CD4-positive, alpha-beta memory T cell (primary cell): ENCODE measurements at regions of chr19 and their contacts with region 1.

Region 1: DNA sequence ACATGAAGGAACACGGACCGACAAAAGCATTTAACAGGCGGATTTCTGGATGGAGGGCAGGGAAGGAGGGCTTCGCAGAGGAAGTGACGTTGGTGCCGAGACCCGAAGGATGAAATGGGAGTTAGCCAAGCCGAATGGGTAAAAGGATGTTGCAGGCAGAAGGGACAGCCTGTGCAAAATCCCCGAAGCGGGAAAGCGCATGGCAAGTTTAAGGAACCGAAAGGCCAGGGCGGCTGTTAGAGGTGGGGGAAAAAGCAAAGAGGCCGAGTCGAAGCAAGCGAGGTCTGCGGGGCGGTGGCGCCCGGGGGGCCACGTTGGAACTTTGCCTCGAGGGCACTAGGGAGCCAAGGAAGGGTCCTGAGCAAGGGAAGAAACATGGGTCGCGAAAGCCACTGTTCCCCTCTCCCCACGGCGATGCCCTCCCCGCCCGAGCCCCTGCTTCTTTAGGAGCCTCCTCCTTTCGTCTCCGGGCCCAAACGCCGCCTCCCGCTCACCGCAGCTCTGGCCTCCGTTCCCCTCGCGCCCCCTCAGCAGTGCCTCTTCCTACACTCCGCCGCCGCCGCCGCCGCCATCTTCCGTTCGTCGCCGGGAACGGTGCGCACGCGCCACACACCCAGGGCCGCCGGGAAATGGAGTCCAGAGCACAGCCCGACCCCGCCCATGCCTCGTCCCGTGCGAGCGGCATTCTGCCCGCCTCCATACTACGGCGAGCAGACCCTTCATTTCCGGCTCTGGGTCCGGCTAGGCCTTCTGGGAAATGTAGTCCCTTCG is at the start of gene SYMPK:
- DNase-seq: peak; percentile 98 to 99 (median 99)
- H3K4me3 ChIP-seq: peak within 1 kb of the TSS; percentile 66 to 84
- H3K4me3 Mint-ChIP-seq: peak within 1 kb of the TSS; percentile 88 to 100 (median 97)
- H3K27ac ChIP-seq: peak within 1 kb of the TSS; percentile 85
- H3K27ac Mint-ChIP-seq: peak within 1 kb of the TSS; percentile 68 to 100 (median 97)
- H3K4me1 ChIP-seq: peaks cover 23% of the 10 kb centered on the region
- H3K4me1 Mint-ChIP-seq: peaks cover 19 to 42% (median 28%) of the 10 kb centered on the region in 4 donors
- H3K27me3 ChIP-seq: no peaks in the 10 kb centered on the region
- H3K27me3 Mint-ChIP-seq: peaks cover 1 to 6% of the 10 kb centered on the region in 2 donors
- total RNA-seq, gene SYMPK: 93.9 to 98.2 TPM

Region 2: DNA sequence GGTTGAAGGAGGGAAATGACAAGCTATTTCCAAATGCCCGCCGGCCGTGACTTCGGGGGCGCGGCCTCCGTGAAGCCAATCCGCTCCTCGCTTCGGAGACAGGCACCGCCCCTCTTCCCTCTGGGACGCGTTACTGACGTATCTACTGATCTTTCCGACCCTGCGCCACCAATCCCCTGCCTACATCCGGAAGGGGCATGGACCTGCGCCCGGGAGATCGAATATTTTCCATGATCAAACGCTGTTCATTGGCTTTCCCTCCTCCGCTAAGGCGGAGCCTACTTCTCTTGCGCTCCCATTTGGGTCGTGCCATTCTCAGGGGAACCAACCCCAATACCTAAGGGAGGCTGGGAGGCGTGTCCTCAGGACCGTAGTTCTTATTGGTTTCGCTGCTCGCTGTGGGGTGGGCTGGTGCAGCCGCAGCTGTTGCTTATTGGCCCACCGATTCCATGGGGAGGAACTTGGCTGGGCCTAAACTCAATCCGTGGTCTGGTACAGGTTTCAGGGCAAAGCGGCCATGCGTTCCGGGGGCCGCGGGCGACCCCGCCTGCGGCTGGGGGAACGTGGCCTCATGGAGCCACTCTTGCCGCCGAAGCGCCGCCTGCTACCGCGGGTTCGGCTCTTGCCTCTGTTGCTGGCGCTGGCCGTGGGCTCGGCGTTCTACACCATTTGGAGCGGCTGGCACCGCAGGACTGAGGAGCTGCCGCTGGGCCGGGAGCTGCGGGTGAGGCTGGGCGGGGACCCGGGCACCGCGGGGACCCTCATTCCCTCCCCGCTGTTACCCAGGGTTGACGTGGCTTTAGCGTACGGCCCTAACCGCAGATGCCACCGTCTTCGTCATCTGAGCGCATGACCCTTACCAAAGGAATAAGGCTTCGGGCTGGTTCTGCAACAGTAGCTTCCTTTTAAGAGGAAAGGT is 170.3 kb before region 1 on chr19 and contains the start of gene QPCTL:
- CTCF ChIA-PET with region 1: no interaction called
- POLR2A ChIA-PET with region 1: interaction called, 5 read pairs
- intact Hi-C with region 1: loop called (anchors 1 kb)
- DNase-seq: peak; percentile 98 to 99 (median 98)
- H3K4me3 ChIP-seq: peak within 1 kb of the TSS; percentile 70 to 94
- H3K4me3 Mint-ChIP-seq: peak within 1 kb of the TSS; percentile 90 to 100 (median 94)
- H3K27ac ChIP-seq: peak within 1 kb of the TSS; percentile 88
- H3K27ac Mint-ChIP-seq: peak within 1 kb of the TSS; percentile 91 to 100 (median 97)
- H3K4me1 ChIP-seq: peaks cover 17% of the 10 kb centered on the region
- H3K4me1 Mint-ChIP-seq: peaks cover 11 to 35% (median 17%) of the 10 kb centered on the region in 4 donors
- H3K27me3 ChIP-seq: no peaks in the 10 kb centered on the region
- H3K27me3 Mint-ChIP-seq: no peaks in the 10 kb centered on the region
- total RNA-seq, gene QPCTL: 10.8 to 11.4 TPM

Region 3: DNA sequence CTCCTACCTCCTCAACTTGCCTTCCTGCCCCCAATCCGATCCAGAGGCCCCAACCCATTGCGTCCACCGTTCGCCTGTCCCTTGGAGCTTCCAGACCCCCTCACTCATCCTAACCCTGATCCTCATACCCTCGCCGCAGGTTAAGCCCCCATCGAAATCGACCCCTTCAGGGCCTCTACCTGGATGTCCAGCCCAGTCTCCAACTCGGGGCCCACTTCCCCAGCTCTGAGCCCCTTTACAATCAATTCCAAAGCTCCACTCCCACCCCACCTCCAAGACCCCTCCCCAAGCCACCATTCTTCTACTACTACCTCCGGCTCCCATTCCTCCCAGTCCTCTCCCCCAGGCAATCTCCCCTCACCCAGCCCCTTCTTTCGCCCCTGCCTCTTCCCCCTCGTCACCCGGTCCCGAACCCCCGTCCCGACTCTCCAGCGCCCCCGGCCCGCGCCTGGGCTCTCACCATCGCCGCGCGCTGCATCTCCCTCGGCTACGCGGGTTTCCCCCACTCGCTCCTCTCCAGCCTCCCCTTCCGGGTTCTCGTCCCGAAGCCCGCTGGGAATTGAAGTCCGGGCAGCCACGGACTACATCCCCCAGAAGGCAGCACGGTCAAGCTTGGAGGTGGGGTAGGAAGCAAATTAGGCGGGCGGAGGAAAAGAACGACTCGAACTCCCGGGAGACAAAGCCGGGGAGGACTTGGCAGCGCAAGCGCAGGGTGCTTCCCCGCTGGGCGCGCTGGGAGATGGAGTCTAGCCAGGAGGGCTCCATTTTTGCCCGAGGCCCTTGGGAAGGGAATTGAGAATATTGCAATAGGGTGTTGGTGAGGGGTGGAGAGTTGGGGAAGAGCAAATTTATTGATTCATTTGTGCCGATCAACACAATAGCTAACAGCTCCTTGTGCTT is 132.1 kb before region 1 on chr19 and contains the start of gene FBXO46:
- CTCF ChIA-PET with region 1: no interaction called
- POLR2A ChIA-PET with region 1: interaction called, 4 read pairs
- intact Hi-C with region 1: loop called (anchors 2 kb)
- DNase-seq: peak; percentile 90 to 97 (median 92)
- H3K4me3 ChIP-seq: peak within 1 kb of the TSS; percentile 68 to 97
- H3K4me3 Mint-ChIP-seq: peak within 1 kb of the TSS; percentile 89 to 100 (median 93)
- H3K27ac ChIP-seq: peak within 1 kb of the TSS; percentile 89
- H3K27ac Mint-ChIP-seq: peak within 1 kb of the TSS; percentile 83 to 96 (median 94)
- H3K4me1 ChIP-seq: peaks cover 35% of the 10 kb centered on the region
- H3K4me1 Mint-ChIP-seq: peaks cover 16 to 51% (median 30%) of the 10 kb centered on the region in 4 donors
- H3K27me3 ChIP-seq: no peaks in the 10 kb centered on the region
- H3K27me3 Mint-ChIP-seq: no peaks in the 10 kb centered on the region
- total RNA-seq, gene FBXO46: 33.1 to 37.3 TPM

Region 4: DNA sequence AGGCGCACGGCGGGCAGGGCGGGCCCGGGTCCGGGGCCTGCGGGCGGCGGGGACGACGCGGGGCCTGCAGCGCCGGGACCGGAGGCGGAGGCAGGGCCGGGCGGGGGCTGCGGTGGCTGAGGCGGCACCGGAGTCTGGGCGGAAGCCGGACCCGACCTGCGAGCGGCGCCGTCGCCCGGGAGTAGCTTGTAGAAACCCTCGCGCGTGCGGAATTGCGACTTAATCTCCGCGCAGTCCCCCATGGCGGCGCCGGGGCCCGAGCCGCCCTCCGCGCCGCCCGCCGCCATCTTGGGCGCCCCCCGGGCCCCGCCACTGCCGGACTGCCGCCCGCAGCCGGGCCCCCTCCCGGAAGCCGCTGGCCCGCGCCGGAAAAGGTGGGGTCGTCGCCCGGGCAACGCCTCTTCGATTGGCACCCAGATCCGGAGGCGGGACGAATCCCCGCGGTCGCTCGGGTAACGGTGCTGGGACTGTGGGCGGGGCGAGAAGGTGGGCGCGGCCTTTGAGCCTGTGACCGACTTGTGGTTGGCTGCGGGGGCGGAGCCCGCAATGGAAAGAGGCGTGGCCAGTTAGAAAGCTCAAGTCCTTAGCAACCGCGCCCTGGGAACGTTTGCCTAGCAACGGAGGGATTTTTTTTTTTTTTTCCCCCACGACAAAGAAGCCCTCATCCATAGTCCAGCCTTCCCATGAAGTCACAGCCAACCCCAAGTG is 70.1 kb before region 1 on chr19 and contains the start of gene DMWD:
- CTCF ChIA-PET with region 1: no interaction called
- POLR2A ChIA-PET with region 1: interaction called, 11 read pairs
- intact Hi-C with region 1: loop called (anchors 2 kb)
- DNase-seq: peak; percentile 97 to 99 (median 98)
- H3K4me3 ChIP-seq: peak within 1 kb of the TSS; percentile 33 to 62
- H3K4me3 Mint-ChIP-seq: peak within 1 kb of the TSS; percentile 82 to 92 (median 89)
- H3K27ac ChIP-seq: no peak within 1 kb of the TSS
- H3K27ac Mint-ChIP-seq: peak within 1 kb of the TSS; percentile 79 to 96 (median 91)
- H3K4me1 ChIP-seq: peaks cover 32% of the 10 kb centered on the region
- H3K4me1 Mint-ChIP-seq: peaks cover 31 to 46% (median 36%) of the 10 kb centered on the region in 4 donors
- H3K27me3 ChIP-seq: peaks cover 4% of the 10 kb centered on the region
- H3K27me3 Mint-ChIP-seq: peaks cover 8 to 20% of the 10 kb centered on the region in 2 donors
- total RNA-seq, gene DMWD: 49.3 to 52.6 TPM

Region 5: GRCh38 chr19:45886427-45887199 is 23.9 kb after region 1 on chr19:
- CTCF ChIA-PET with region 1: interaction called, 38 read pairs
- POLR2A ChIA-PET with region 1: interaction called, 47 read pairs
- intact Hi-C with region 1: loop called (anchors 1 kb)
- DNase-seq: peak; percentile 87 to 93 (median 91)
- H3K4me3 ChIP-seq: peak overlapping the region; percentile 65 to 71
- H3K4me3 Mint-ChIP-seq: peak overlapping the region; percentile 94 to 98 (median 98)
- H3K27ac ChIP-seq: peak overlapping the region; percentile 68
- H3K27ac Mint-ChIP-seq: peak overlapping the region; percentile 97 to 99 (median 99)
- H3K4me1 ChIP-seq: peaks cover 40% of the 10 kb centered on the region
- H3K4me1 Mint-ChIP-seq: peaks cover 11 to 36% (median 19%) of the 10 kb centered on the region in 4 donors
- H3K27me3 ChIP-seq: no peaks in the 10 kb centered on the region
- H3K27me3 Mint-ChIP-seq: peaks cover 0 to under 1% of the 10 kb centered on the region in 2 donors

Region 6: DNA sequence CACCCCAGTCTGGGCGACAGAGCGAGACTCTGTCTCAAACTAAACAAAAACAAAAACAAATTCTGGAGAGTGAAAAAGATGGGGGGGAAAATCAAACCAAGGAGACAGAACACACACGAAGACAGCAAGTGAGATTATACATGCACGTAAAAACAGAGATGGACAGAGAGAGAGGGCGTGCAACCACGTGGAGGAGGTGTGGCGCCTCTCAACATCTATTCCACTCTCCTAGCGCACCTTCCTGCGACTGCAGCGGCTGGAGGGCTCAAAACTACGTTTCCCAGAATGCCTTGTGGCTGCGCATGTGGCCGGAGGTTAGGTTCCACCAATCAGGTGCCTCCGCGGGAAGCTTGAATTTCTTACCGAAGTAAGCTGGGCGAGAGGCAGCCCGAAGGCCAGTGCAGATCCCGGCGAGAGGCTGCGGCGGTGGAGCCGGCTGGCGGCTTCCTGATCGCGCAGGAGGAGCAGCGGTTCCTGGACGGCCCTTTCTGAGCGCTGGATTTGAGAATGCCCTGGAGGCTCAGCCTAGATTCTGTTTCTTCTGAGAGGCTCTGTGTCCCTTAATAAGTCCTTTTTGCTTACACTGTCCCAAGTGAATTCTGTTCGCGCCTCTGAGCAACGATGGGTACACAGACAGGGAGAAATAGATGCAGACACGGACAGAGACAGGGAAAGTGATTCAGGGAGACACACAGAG is 65.0 kb after region 1 on chr19:
- CTCF ChIA-PET with region 1: no interaction called
- POLR2A ChIA-PET with region 1: interaction called, 5 read pairs
- intact Hi-C with region 1: loop called (anchors 2 kb)
- DNase-seq: peak; percentile 85 to 90 (median 87)
- H3K4me3 ChIP-seq: no peak overlapping the region
- H3K4me3 Mint-ChIP-seq: peak overlapping the region in 5 of 8 donors; percentile 12 to 69 (median 27)
- H3K27ac ChIP-seq: no peak overlapping the region
- H3K27ac Mint-ChIP-seq: peak overlapping the region in 3 of 7 donors; percentile 43 to 84 (median 70)
- H3K4me1 ChIP-seq: peaks cover 8% of the 10 kb centered on the region
- H3K4me1 Mint-ChIP-seq: peaks cover 2 to 12% (median 6%) of the 10 kb centered on the region in 4 donors
- H3K27me3 ChIP-seq: no peaks in the 10 kb centered on the region
- H3K27me3 Mint-ChIP-seq: peaks cover 5 to 8% of the 10 kb centered on the region in 2 donors

Region 7: DNA sequence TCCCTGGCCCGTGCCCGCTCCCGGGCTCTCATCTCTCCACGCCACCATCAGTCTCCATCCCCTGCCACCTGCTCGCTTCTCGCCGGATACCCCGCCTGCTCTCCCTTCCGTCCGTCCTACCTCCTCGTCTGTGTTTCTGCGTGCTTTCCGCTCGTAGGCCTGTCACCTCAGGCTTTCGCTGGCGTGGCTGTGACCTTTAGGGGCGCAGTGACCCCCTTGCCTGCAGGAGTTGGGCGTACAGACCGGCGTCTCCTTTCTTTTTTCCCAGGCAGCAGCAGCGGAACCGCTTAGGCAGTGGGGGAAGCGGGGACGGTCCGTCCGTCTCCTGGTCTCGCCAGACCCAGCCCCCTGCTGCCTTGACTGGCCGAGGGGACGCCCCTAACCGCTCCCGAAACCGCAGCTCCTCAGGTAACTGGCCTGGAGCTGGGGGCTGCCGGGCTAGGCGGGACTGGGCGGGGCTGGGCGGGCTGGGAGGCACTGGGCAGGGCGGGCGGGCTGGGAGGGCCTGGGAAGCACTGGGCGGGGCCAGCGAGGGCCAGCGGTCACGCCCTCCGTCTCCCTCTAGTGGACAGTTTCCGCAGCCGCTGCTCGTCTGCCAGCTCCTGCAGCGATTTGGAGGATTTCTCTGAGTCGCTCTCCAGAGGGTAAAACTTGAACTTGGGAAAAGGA is 153.8 kb after region 1 on chr19:
- CTCF ChIA-PET with region 1: interaction called, 9 read pairs
- POLR2A ChIA-PET with region 1: no interaction called
- intact Hi-C with region 1: loop called (anchors 2 kb)
- DNase-seq: peak; percentile 69 to 79 (median 76)
- H3K4me3 ChIP-seq: peak overlapping the region; percentile 76 to 80
- H3K4me3 Mint-ChIP-seq: peak overlapping the region; percentile 86 to 94 (median 91)
- H3K27ac ChIP-seq: peak overlapping the region; percentile 53
- H3K27ac Mint-ChIP-seq: peak overlapping the region; percentile 10 to 88 (median 71)
- H3K4me1 ChIP-seq: peaks cover 14% of the 10 kb centered on the region
- H3K4me1 Mint-ChIP-seq: peaks cover 12 to 21% (median 16%) of the 10 kb centered on the region in 4 donors
- H3K27me3 ChIP-seq: no peaks in the 10 kb centered on the region
- H3K27me3 Mint-ChIP-seq: peaks cover 0 to 5% of the 10 kb centered on the region in 2 donors